MCF 10A (cell line): ENCODE measurements at regions of chr10 and their contacts with region 1.

Region 1: GRCh38 chr10:118995739-118996138 is 33.8 kb upstream of the NANOS1 start:
- DNase-seq: no peak
- H3K4me3 Mint-ChIP-seq: no peak overlapping the region
- H3K27ac Mint-ChIP-seq: no peak overlapping the region
- H3K4me1 Mint-ChIP-seq: peaks cover 2% of the 10 kb centered on the region
- H3K27me3 Mint-ChIP-seq: no peaks in the 10 kb centered on the region
- CTCF ChIP-seq: no peak

Region 2: GRCh38 chr10:118290471-118290995 is 705.2 kb before region 1 on chr10:
- CTCF ChIA-PET with region 1: no interaction called
- POLR2A ChIA-PET with region 1: no interaction called
- intact Hi-C with region 1: no loop called
- DNase-seq: peak; percentile 63
- H3K4me3 Mint-ChIP-seq: no peak overlapping the region
- H3K27ac Mint-ChIP-seq: no peak overlapping the region
- H3K4me1 Mint-ChIP-seq: no peaks in the 10 kb centered on the region
- H3K27me3 Mint-ChIP-seq: no peaks in the 10 kb centered on the region
- CTCF ChIP-seq: no peak

Region 3: DNA sequence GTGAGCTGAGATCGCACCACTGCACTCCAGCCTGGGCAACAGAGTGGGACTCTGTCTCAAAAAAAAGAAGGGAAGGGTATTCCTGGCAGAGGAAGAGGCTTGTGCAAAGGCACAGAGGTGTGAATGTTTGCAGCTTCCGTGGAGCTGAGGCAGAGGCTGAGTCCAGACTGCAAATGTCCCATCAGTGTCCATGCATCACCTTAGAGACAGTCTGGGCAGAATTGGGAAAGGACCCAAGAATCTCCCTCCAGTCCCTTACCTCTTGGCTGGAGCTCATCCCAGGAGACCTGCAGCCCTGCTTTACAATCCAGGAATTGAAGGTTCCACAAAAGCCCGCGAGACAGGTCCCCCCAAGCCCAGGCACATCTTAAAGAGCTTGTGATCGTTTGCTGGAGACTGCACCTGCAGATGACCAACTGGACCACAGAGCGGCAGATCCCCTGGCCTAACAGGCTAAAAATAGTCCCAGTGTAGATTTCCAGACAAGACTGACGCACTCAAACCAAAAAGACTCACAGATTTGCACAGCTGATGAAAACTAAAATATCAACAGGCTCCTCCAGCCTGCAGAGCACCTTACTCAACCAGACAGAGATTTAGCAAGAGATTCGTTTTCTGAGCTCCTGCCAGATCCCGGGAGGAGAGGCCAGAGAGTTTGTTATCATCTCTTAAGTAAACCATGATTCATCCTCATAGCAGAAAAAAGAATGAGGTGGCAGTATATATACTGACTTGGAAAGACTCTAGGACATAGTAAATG is 10.9 kb after region 1 on chr10:
- CTCF ChIA-PET with region 1: interaction called, 3 read pairs
- POLR2A ChIA-PET with region 1: interaction called, 12 read pairs
- intact Hi-C with region 1: no loop called
- DNase-seq: peak; percentile 98
- H3K4me3 Mint-ChIP-seq: no peak overlapping the region
- H3K27ac Mint-ChIP-seq: peak overlapping the region; percentile 46
- H3K4me1 Mint-ChIP-seq: peaks cover 30% of the 10 kb centered on the region
- H3K27me3 Mint-ChIP-seq: no peaks in the 10 kb centered on the region
- CTCF ChIP-seq: no peak